ENCODE measurements at regions of chr7 and their contacts with region 1.

Region 1: DNA sequence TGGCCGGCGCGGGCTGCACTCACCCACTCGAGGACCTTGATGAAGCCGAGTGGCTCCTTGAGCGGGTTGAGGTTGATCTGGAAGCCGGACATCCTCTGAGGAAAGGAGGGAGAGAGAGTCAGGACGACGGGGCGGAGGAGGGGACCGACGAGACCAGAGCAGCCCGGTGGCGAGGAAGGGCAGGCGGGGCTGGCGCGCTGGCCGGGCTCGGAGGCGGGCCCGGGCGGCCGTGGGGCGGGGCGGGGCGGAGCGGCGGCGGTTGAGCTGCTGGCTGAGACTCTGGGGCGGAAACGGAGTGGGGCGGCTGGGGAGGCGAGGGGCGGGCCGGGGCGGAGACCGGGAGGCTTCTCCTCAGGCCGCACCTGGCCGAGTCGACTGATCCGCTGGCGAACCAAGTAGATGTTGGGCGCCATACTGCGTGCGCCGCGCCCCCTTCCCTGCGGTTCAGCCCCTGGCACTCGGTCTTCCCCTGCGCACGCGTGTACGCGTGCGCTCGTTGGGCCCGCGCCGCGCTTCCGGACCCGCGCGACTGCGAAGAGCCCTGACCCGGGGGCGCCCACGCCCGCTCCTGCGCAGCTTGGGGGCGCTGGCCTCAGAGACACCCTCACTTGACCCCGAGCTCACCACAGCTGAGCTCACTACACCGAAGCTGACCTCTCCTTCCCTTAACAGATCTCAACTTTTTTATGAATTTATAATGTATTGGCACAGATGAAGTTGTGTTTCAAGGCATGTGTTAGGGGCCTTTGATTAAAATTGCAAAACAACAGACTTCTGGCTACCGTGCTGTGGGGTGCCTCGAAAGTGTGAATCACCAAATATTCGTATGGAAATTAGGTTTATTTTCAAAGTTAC is at the start of gene SYPL1:
- DNase-seq: peak; percentile 97
- ATAC-seq: peak; percentile 79
- H3K4me3 ChIP-seq: peak within 1 kb of the TSS; percentile 80 to 94 (median 81)
- H3K4me3 Mint-ChIP-seq: peak within 1 kb of the TSS; percentile 95
- H3K27ac ChIP-seq: peak within 1 kb of the TSS; percentile 91 to 95
- H3K27ac Mint-ChIP-seq: peak within 1 kb of the TSS; percentile 96
- H3K4me1 ChIP-seq: peaks cover 66 to 70% of the 10 kb centered on the region in 2 donors
- H3K4me1 Mint-ChIP-seq: peaks cover 74% of the 10 kb centered on the region
- H3K27me3 ChIP-seq: no peaks in the 10 kb centered on the region
- H3K27me3 Mint-ChIP-seq: no peaks in the 10 kb centered on the region
- CTCF ChIP-seq: no peak
- total RNA-seq, gene SYPL1: 126 and 130 TPM in 2 replicates

Region 2: GRCh38 chr7:105531792-105532671 is 580.3 kb before region 1 on chr7 and contains the start of gene RINT1:
- CTCF ChIA-PET with region 1: no interaction called
- POLR2A ChIA-PET with region 1: interaction called, 10 read pairs
- intact Hi-C with region 1: no loop called
- DNase-seq: peak; percentile 95
- ATAC-seq: peak; percentile 97
- H3K4me3 ChIP-seq: peak within 1 kb of the TSS; percentile 81 to 98 (median 88)
- H3K4me3 Mint-ChIP-seq: peak within 1 kb of the TSS; percentile 92
- H3K27ac ChIP-seq: peak within 1 kb of the TSS; percentile 74 to 91
- H3K27ac Mint-ChIP-seq: peak within 1 kb of the TSS; percentile 97
- H3K4me1 ChIP-seq: peaks cover 18 to 22% of the 10 kb centered on the region in 2 donors
- H3K4me1 Mint-ChIP-seq: peaks cover 24% of the 10 kb centered on the region
- H3K27me3 ChIP-seq: no peaks in the 10 kb centered on the region
- H3K27me3 Mint-ChIP-seq: no peaks in the 10 kb centered on the region
- CTCF ChIP-seq: peak; percentile 84
- total RNA-seq, gene RINT1: 27.2 and 28.0 TPM in 2 replicates

Region 3: GRCh38 chr7:106064771-106065585 is 47.4 kb before region 1 on chr7:
- CTCF ChIA-PET with region 1: interaction called, 3 read pairs
- POLR2A ChIA-PET with region 1: interaction called, 10 read pairs
- intact Hi-C with region 1: no loop called
- DNase-seq: no peak
- ATAC-seq: no peak
- H3K4me3 ChIP-seq: no peak overlapping the region
- H3K4me3 Mint-ChIP-seq: peak overlapping the region; percentile 16
- H3K27ac ChIP-seq: no peak overlapping the region
- H3K27ac Mint-ChIP-seq: peak overlapping the region; percentile 93
- H3K4me1 ChIP-seq: peaks cover 92 to 100% of the 10 kb centered on the region in 2 donors
- H3K4me1 Mint-ChIP-seq: peaks cover 94% of the 10 kb centered on the region
- H3K27me3 ChIP-seq: no peaks in the 10 kb centered on the region
- H3K27me3 Mint-ChIP-seq: no peaks in the 10 kb centered on the region
- CTCF ChIP-seq: no peak

Region 4: GRCh38 chr7:106089647-106090046 is 22.7 kb before region 1 on chr7:
- CTCF ChIA-PET with region 1: interaction called, 14 read pairs
- POLR2A ChIA-PET with region 1: interaction called, 9 read pairs
- intact Hi-C with region 1: loop called (anchors 2 kb)
- DNase-seq: peak; percentile 53
- ATAC-seq: peak; percentile 87
- H3K4me3 ChIP-seq: peak overlapping the region in 1 of 5 experiments; percentile 28
- H3K4me3 Mint-ChIP-seq: peak overlapping the region; percentile 72
- H3K27ac ChIP-seq: peak overlapping the region; percentile 63 to 77
- H3K27ac Mint-ChIP-seq: peak overlapping the region; percentile 92
- H3K4me1 ChIP-seq: peaks cover 37 to 69% of the 10 kb centered on the region in 2 donors
- H3K4me1 Mint-ChIP-seq: peaks cover 77% of the 10 kb centered on the region
- H3K27me3 ChIP-seq: no peaks in the 10 kb centered on the region
- H3K27me3 Mint-ChIP-seq: no peaks in the 10 kb centered on the region
- CTCF ChIP-seq: no peak

Region 5: DNA sequence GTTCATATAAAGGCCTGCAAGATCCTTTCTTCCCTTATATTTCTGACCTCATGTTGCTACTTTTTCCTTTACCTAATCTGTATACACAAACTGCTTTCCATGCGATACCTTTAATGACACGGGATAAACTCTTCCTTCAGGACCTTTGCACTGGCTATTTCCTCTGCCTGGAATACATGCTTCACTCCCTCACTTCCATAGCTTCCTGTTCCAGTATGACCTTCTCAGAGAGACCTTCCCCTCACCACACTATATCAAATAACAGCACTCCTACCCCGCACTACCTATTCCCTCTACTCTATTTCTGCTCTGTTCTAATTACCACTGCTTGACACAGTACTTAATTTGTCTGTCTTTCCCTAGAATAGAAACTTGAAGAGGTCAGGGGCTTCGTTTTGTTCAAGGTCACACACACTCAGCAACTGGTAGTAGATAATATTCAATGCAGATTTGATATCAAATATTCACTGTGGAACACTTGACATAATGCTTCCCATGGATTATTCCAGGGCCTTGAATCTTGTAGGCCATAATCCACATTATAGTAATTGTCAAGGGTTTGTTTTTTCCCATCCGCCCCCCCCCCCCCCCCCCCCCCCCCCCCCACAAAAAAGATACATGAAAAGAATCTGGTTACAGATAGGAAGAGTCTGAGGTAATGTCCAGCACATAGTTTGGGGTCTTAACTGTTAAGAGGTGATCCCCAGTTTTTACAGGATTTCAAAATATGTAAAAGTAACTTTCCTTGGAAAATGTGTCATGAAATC is 11.3 kb before region 1 on chr7:
- CTCF ChIA-PET with region 1: interaction called, 13 read pairs
- POLR2A ChIA-PET with region 1: interaction called, 11 read pairs
- intact Hi-C with region 1: loop called (anchors 1 kb)
- DNase-seq: no peak
- ATAC-seq: no peak
- H3K4me3 ChIP-seq: no peak overlapping the region
- H3K4me3 Mint-ChIP-seq: peak overlapping the region; percentile 5
- H3K27ac ChIP-seq: peak overlapping the region in 1 of 2 donors; percentile 69
- H3K27ac Mint-ChIP-seq: peak overlapping the region; percentile 32
- H3K4me1 ChIP-seq: peaks cover 54 to 71% of the 10 kb centered on the region in 2 donors
- H3K4me1 Mint-ChIP-seq: peaks cover 76% of the 10 kb centered on the region
- H3K27me3 ChIP-seq: no peaks in the 10 kb centered on the region
- H3K27me3 Mint-ChIP-seq: no peaks in the 10 kb centered on the region
- CTCF ChIP-seq: no peak

Region 6: DNA sequence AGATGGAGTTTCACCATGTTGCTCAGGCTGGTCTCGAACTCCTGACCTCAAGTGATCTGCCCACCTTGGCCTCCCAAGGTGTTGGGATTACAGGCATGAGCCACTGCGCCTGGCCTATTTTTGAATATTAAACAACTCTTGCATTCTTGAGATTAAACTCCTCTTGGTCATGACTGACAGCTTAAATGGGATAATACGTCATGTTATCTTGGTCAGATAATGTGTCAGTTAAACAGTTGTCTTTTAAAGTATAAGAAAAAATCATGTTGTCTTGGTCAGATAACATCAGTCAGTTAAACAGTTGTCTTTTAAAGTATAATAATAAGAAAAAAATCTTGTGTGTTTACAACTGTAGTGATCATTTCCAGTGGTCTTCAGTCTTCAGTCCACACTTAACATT is 73.4 kb after region 1 on chr7:
- CTCF ChIA-PET with region 1: no interaction called
- POLR2A ChIA-PET with region 1: no interaction called
- intact Hi-C with region 1: no loop called
- DNase-seq: no peak
- ATAC-seq: no peak
- H3K4me3 ChIP-seq: no peak overlapping the region
- H3K4me3 Mint-ChIP-seq: no peak overlapping the region
- H3K27ac ChIP-seq: no peak overlapping the region
- H3K27ac Mint-ChIP-seq: no peak overlapping the region
- H3K4me1 ChIP-seq: no peaks in the 10 kb centered on the region
- H3K4me1 Mint-ChIP-seq: no peaks in the 10 kb centered on the region
- H3K27me3 ChIP-seq: no peaks in the 10 kb centered on the region
- H3K27me3 Mint-ChIP-seq: peaks cover 7% of the 10 kb centered on the region
- CTCF ChIP-seq: no peak

Measured in B cell (primary cell).